ENCODE measurements at regions of chr17 and their contacts with region 1.

Region 1: DNA sequence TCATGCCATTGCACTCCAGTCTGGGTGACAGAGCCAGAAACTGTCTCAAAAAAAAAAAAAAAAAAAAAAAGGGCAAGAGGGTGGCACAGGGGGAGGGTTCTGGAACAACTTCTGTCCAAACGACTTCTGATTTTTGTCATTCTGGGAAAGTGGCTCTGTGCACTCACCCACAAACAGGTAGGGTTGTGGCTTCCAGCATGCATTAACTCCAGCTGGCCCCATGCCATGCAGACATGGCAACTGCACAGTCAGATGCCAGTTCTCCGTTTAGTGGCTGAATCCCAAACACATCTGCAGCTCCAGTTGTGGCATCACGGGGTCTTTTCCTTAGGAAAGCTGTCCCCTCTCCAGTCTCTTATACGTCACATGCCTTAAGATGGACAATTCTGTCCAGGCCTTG is 30.3 kb downstream of the B4GALNT2 start:
- DNase-seq: no peak
- H3K4me3 Mint-ChIP-seq: no peak overlapping the region
- H3K27ac Mint-ChIP-seq: no peak overlapping the region
- H3K4me1 Mint-ChIP-seq: no peaks in the 10 kb centered on the region
- H3K27me3 Mint-ChIP-seq: peaks cover 9% of the 10 kb centered on the region

Region 2: DNA sequence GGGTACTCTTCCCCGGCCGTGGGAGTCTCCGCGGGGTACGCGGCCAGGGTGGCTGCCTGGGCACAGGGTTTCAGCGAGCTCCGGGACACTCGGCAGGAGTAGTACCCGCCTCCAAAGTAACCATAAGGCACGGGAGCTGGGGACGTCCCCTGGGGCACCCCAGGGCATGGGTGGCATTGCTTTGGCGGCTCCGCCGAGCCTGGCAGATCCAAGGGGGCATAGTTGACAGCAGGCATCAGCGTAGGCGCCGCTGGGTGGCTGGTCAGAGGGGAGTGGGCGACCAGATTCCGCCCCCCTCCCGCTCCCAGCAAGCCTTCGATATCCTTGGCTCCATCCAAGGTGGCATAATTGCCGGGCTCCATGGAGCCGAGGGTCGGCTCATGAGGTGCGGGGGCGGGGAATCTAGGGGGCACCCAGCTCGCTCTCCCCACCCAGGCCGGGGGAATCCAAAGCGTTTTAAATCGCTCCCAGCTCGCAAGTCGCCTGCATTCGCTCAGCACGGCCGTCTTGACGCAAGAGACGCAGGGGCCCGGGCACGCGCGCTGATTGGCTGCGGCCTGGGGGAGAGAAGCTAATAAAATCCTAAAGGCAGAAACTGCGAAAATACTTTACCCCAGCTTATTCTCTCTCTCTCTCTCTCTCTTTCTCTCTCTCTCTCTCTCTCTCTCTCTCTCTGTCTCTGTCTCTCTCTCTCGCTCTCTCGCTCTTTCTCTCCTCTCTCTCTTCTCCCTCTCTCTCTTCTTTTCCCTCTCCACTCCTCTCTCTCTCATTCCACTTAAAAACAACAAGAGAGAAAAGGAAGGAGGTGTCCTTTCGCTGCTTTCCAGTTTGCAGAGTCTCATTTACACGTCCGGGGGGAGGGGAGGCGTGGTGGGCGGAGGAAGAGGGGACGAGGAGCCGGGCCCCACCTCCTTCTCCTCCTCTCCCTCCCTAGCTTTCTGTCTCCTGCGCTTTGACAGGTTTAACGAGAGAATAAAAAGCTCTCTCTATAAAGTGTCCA is 434.3 kb before region 1 on chr17 and contains the start of gene HOXB13:
- CTCF ChIA-PET with region 1: no interaction called
- intact Hi-C with region 1: no loop called
- DNase-seq: peak; percentile 56
- H3K4me3 Mint-ChIP-seq: peak within 1 kb of the TSS; percentile 58
- H3K27ac Mint-ChIP-seq: no peak within 1 kb of the TSS
- H3K4me1 Mint-ChIP-seq: peaks cover 40% of the 10 kb centered on the region
- H3K27me3 Mint-ChIP-seq: peaks cover 85% of the 10 kb centered on the region
- total RNA-seq, gene HOXB13: not detected

Region 3: DNA sequence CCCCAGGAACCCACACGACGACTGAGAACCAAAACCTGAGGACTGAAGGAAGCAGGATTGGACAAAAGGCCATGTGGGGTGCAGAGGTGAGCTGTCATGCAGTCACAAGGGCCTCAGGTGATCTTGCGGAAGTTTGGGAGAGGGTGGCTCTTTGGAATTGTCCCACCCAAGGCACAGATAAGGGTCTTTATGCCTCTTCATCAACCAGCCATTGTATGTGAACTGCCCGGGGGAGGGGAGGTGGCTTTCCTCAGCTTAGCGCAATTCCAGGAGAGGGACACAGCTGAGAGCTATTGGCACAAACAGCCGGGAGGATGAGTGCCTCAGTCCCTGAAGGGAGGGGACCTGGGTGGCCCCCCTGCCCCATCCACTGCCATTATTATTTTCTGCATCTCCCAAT is 122.8 kb after region 1 on chr17:
- CTCF ChIA-PET with region 1: no interaction called
- intact Hi-C with region 1: loop called (anchors 5 kb)
- DNase-seq: no peak
- H3K4me3 Mint-ChIP-seq: no peak overlapping the region
- H3K27ac Mint-ChIP-seq: no peak overlapping the region
- H3K4me1 Mint-ChIP-seq: no peaks in the 10 kb centered on the region
- H3K27me3 Mint-ChIP-seq: no peaks in the 10 kb centered on the region

Measured in activated naive CD4-positive, alpha-beta T cell treated with anti-CD3 and anti-CD28 coated beads for 36 hours (primary cell).